Breast epithelium (tissue), 4 donors: ENCODE measurements at regions of chr6 and their contacts with region 1.

Region 1: GRCh38 chr6:145705561-145705960 is 29.8 kb downstream of the EPM2A start:
- DNase-seq: no peak
- H3K4me3 ChIP-seq: no peak overlapping the region
- H3K27ac ChIP-seq: no peak overlapping the region
- H3K4me1 ChIP-seq: no peaks in the 10 kb centered on the region
- H3K27me3 ChIP-seq: no peaks in the 10 kb centered on the region
- CTCF ChIP-seq: no peak
- POLR2A ChIP-seq: no peak

Region 2: DNA sequence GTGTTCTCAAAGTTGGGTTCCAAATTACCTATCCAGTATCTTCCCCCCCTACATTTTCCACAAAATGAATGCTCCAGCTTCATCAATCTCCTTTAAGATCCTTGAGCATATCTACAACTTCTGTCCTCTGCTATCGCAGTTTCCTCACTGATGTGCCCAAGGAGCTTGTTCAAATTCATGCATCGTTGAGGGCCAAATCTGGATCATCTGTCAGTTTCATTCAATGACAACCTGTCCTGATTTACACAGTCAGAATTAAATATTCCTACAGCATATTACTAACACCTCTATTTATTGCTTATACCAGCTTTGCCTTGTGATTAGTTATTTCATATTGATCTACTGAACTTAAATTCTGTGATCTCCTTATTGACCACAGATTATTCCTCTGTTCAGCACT is 392.0 kb after region 1 on chr6:
- intact Hi-C with region 1: loop called (anchors 5 kb)
- DNase-seq: no peak
- H3K4me3 ChIP-seq: no peak overlapping the region
- H3K27ac ChIP-seq: no peak overlapping the region
- H3K4me1 ChIP-seq: no peaks in the 10 kb centered on the region
- H3K27me3 ChIP-seq: no peaks in the 10 kb centered on the region
- CTCF ChIP-seq: no peak
- POLR2A ChIP-seq: no peak

Region 3: GRCh38 chr6:146240322-146240721 is 534.8 kb after region 1 on chr6:
- intact Hi-C with region 1: no loop called
- DNase-seq: no peak
- H3K4me3 ChIP-seq: no peak overlapping the region
- H3K27ac ChIP-seq: no peak overlapping the region
- H3K4me1 ChIP-seq: no peaks in the 10 kb centered on the region
- H3K27me3 ChIP-seq: no peaks in the 10 kb centered on the region
- CTCF ChIP-seq: no peak
- POLR2A ChIP-seq: no peak